ENCODE measurements at regions of chr10 and their contacts with region 1.

Region 1: GRCh38 chr10:98664331-98665042 is 217.8 kb upstream of the HPS1 start:
- DNase-seq: peak; percentile 7
- ATAC-seq: peak; percentile 67
- H3K4me3 ChIP-seq: no peak overlapping the region
- H3K27ac ChIP-seq: no peak overlapping the region
- H3K4me1 ChIP-seq: no peaks in the 10 kb centered on the region
- H3K27me3 ChIP-seq: no peaks in the 10 kb centered on the region
- CTCF ChIP-seq: peak; percentile 50
- POLR2A ChIP-seq: no peak
- RAD21 ChIP-seq: peak; percentile 53

Region 2: DNA sequence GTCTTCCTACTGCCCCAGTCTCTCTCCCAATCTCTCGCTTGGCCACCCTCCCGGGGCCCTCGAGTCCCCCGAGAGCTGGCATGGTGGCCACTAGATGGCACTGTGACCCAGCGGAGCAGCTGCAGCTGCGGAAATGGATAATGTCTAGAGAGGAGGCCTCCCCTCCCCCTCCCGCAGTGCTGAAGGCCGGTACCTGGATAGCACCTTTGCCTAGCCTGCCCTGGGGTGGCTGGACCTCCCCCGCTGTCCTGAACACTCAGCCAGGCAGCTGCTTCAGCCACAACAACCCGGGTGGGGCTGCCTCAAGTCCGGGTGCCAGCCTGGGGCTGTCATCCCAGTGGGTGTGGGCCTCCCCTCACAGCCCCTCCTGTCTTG is 749.7 kb before region 1 on chr10:
- CTCF ChIA-PET with region 1: no interaction called
- POLR2A ChIA-PET with region 1: no interaction called
- dilution Hi-C with region 1: no loop called
- in situ Hi-C with region 1: no loop called
- intact Hi-C with region 1: loop called (anchors 10 kb)
- DNase-seq: peak; percentile 37
- ATAC-seq: peak; percentile 97
- H3K4me3 ChIP-seq: no peak overlapping the region
- H3K27ac ChIP-seq: no peak overlapping the region
- H3K4me1 ChIP-seq: no peaks in the 10 kb centered on the region
- H3K27me3 ChIP-seq: peaks cover 27% of the 10 kb centered on the region
- CTCF ChIP-seq: peak; percentile 80
- POLR2A ChIP-seq: no peak
- RAD21 ChIP-seq: peak; percentile 86

Region 3: GRCh38 chr10:98460837-98461499 is 203.5 kb before region 1 on chr10:
- CTCF ChIA-PET with region 1: no interaction called
- POLR2A ChIA-PET with region 1: no interaction called
- dilution Hi-C with region 1: no loop called
- in situ Hi-C with region 1: loop called (anchors 5 kb)
- intact Hi-C with region 1: no loop called
- DNase-seq: peak; percentile 96
- ATAC-seq: peak; percentile 89
- H3K4me3 ChIP-seq: no peak overlapping the region
- H3K27ac ChIP-seq: peak overlapping the region; percentile 59
- H3K4me1 ChIP-seq: peaks cover 4% of the 10 kb centered on the region
- H3K27me3 ChIP-seq: no peaks in the 10 kb centered on the region
- CTCF ChIP-seq: no peak
- POLR2A ChIP-seq: no peak
- RAD21 ChIP-seq: no peak

Region 4: DNA sequence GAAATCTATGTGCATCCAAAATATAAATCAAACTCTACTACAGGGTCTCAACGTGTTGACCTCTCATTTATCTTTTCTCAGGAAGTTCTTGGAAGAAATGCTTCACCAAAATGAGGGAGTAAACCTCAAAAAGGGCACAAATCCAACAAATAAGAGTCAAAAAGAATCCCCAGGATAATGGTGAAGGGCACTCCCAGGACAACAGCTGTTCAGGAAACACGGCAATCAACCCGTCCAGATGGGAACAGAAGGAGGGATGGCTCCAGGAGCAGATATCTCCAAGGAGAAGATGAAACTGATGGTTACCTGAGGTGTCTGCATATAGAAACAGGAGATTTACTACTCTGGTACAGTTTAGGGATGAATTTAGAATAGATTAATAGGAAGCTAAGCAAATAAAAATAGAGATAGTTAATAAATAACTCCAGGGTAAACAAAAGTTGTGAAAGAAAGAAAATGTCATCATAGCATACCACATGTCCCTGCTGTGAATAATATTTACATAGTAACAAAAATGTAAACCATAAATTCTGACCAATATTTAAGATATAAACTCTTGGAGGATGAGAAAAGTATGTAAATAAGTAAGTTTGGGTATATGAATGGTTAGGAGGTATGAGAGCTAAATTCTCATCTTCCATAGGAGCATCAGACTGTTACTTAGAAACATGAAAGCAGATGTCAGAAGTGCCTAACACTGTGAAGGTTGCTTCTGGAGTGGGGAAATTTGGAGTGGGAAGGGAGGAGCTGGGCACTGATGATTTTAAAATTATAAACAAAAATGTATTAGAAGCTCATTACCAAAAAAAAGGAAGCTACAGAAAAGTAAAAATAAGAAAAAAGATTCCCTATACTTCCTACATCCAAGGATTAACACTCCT is 19.8 kb after region 1 on chr10:
- CTCF ChIA-PET with region 1: no interaction called
- POLR2A ChIA-PET with region 1: no interaction called
- dilution Hi-C with region 1: no loop called
- in situ Hi-C with region 1: no loop called
- intact Hi-C with region 1: no loop called
- DNase-seq: no peak
- ATAC-seq: no peak; the same call in 1 of the 2 replicates
- H3K4me3 ChIP-seq: no peak overlapping the region
- H3K27ac ChIP-seq: no peak overlapping the region
- H3K4me1 ChIP-seq: no peaks in the 10 kb centered on the region
- H3K27me3 ChIP-seq: no peaks in the 10 kb centered on the region
- CTCF ChIP-seq: no peak
- POLR2A ChIP-seq: no peak
- RAD21 ChIP-seq: no peak

Measured in IMR-90 (cell line).